Posterior vena cava (tissue), 2 donors: ENCODE measurements at regions of chr5 and their contacts with region 1.

Region 1: GRCh38 chr5:177113566-177114424 is 19.8 kb upstream of the NSD1 start:
- DNase-seq: peak; percentile 93

Region 2: GRCh38 chr5:177232761-177233160 is 119.0 kb after region 1 on chr5:
- intact Hi-C with region 1: loop called in 1 of 2 experiments (anchors 10 kb)
- DNase-seq: no peak